PC-9 (cell line): ENCODE measurements at regions of chr1 and their contacts with region 1.

Region 1: DNA sequence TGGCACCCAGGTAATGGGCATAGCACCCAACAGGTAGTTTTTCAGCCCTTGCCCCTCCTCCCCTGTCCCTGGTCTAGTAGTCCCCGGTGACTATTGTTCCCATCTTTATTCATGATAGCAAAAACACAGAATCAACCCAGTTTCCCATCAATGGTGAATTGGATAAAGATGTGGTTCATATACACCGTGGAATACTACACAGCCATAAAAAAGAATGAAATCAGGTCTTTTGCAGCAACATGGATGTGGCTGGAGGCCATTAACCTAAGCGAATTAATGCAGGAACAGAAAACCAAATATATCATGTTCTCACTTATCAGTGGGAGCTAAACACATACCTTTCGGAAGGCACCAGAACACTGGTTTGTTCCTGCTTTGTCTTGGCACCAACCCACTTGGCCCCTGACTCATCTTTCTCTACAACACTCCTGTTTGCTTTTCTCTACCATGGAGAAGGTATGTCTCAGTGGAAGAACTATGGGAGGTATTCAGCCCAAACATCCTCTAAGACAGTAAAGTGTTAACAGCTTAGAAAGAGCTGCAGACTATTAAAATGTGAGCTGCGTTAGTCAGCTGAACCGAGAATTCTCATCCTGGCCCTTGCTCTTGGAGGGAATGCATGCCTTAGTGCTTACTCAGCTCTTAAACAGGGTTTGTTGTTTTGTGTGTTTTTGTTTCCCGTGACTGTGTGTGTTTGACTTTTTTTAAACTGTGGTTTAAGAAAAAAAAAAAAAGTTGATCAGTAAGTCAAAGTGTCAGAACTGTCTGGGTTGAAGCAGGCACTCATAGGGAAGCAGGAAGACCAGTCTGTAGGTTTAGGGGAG is 203.0 kb downstream of the TOMM20 start:
- DNase-seq: peak; percentile 74 to 99
- H3K4me3 ChIP-seq: no peak overlapping the region
- H3K27ac ChIP-seq: peak overlapping the region; percentile 88
- H3K4me1 ChIP-seq: peaks cover 37% of the 10 kb centered on the region
- H3K27me3 ChIP-seq: no peaks in the 10 kb centered on the region
- CTCF ChIP-seq: no peak

Region 2: DNA sequence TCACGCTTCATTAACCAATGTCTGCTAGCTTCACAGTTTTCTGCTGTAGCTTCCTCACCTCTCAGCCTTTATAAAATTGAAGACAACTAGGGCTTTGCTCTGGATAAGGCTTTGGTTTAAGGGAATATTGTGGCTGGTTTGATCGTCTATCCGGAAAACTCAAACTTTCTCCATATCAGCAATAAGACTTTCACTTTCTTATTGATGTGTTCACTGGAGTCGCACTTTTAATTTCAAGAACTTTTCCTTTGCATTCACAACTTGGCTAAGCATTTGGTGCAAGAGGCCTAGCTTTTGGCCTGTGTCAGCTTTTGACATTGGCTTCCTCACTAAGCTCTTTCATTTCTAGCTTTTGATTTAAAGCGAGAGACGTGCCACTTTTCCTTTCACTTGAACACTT is 539.5 kb before region 1 on chr1:
- CTCF ChIA-PET with region 1: no interaction called
- POLR2A ChIA-PET with region 1: no interaction called
- intact Hi-C with region 1: no loop called
- DNase-seq: no peak
- H3K4me3 ChIP-seq: no peak overlapping the region
- H3K27ac ChIP-seq: no peak overlapping the region
- H3K4me1 ChIP-seq: no peaks in the 10 kb centered on the region
- H3K27me3 ChIP-seq: no peaks in the 10 kb centered on the region
- CTCF ChIP-seq: no peak

Region 3: DNA sequence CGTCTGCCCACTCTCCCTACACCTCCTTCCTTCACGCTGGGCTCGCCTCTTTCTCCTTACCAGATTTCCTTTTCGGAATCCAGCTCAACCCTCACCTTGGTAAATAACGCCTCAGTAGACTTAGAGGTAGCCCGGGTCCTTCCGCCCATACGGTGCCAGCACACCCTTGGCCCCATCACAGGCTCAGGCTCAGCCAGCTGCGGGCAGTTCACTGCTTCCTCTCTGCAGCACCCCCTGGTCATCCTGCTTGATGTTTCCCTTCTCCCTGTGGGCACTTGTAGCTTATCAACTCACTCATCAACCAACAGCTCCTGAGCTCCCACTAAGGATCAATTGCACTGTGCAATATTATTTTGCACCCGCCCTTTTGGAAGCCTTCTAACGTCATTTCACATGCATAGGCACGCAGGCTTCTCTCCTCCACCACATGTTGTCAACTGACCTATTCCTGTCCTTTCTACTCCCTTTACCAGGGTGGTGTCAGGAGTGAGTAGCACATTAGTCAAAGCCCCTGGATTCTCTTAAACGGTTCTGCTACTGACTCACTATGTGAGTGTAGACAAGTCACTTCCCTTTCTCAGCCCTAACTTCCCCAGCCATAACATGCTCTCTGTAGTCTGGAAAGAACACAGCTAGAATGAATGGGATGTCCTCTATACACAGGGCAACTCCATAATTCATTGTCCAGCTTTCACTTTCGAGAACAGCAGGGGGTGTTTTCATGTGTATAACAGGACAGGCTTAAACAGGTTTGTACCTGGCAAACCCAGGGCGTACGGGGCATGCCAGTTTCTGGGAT is 268.6 kb before region 1 on chr1:
- CTCF ChIA-PET with region 1: no interaction called
- POLR2A ChIA-PET with region 1: no interaction called
- intact Hi-C with region 1: loop called (anchors 2 kb)
- DNase-seq: peak; percentile 50 to 95
- H3K4me3 ChIP-seq: peak overlapping the region; percentile 69
- H3K27ac ChIP-seq: peak overlapping the region; percentile 99
- H3K4me1 ChIP-seq: peaks cover 59% of the 10 kb centered on the region
- H3K27me3 ChIP-seq: no peaks in the 10 kb centered on the region
- CTCF ChIP-seq: no peak

Region 4: DNA sequence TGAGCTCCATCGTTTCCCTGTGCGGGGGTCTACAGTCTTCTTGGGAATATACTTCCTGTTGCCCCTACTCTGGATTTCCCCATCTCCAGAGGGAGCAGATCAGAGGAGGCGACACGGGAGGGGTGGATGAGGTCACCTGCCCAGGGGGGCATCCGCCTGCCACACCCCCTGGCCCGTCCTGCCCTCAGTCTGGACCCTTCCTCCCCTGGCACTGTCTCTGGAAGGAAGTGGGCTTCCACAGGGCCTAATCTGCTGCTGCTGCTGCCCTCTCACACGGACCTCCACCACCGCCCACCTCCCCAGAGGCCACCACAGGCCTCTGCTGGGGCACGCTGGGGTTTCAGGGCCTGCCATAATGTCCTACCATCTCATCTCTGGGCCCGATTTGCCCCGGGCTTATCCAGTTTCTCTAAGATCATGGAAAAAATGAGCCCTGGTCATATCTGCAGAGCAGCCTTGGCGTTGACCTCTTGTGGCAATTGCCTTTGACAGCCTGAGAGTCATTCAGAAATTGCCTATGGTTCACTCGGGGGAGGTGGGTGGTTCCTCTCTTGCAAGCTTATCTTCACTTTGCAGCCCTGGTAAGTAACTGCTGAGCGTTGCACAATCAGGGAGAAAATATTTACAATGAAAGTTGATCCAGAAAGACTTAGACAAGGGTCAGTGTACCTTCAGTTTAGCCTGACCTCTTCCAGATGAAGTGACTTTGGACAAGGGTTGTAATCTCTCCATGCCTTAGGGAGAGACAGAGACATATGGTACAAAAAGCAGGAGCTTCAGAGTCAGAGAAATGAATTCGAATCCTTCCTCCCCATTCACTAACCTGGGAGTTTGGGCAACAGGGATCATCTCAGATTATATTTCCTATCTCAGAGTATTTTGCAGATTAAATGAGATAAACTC is 49.4 kb before region 1 on chr1:
- CTCF ChIA-PET with region 1: no interaction called
- POLR2A ChIA-PET with region 1: no interaction called
- intact Hi-C with region 1: loop called (anchors 2 kb)
- DNase-seq: peak; percentile 70 to 98
- H3K4me3 ChIP-seq: peak overlapping the region; percentile 45; the same call in 1 of the 2 replicates
- H3K27ac ChIP-seq: peak overlapping the region; percentile 99
- H3K4me1 ChIP-seq: peaks cover 70% of the 10 kb centered on the region
- H3K27me3 ChIP-seq: no peaks in the 10 kb centered on the region
- CTCF ChIP-seq: no peak

Region 5: GRCh38 chr1:234950598-234950997 is 24.9 kb after region 1 on chr1:
- CTCF ChIA-PET with region 1: no interaction called
- POLR2A ChIA-PET with region 1: interaction called, 22 read pairs
- intact Hi-C with region 1: no loop called
- DNase-seq: no peak
- H3K4me3 ChIP-seq: no peak overlapping the region
- H3K27ac ChIP-seq: no peak overlapping the region
- H3K4me1 ChIP-seq: peaks cover 13% of the 10 kb centered on the region
- H3K27me3 ChIP-seq: no peaks in the 10 kb centered on the region
- CTCF ChIP-seq: no peak

Region 6: DNA sequence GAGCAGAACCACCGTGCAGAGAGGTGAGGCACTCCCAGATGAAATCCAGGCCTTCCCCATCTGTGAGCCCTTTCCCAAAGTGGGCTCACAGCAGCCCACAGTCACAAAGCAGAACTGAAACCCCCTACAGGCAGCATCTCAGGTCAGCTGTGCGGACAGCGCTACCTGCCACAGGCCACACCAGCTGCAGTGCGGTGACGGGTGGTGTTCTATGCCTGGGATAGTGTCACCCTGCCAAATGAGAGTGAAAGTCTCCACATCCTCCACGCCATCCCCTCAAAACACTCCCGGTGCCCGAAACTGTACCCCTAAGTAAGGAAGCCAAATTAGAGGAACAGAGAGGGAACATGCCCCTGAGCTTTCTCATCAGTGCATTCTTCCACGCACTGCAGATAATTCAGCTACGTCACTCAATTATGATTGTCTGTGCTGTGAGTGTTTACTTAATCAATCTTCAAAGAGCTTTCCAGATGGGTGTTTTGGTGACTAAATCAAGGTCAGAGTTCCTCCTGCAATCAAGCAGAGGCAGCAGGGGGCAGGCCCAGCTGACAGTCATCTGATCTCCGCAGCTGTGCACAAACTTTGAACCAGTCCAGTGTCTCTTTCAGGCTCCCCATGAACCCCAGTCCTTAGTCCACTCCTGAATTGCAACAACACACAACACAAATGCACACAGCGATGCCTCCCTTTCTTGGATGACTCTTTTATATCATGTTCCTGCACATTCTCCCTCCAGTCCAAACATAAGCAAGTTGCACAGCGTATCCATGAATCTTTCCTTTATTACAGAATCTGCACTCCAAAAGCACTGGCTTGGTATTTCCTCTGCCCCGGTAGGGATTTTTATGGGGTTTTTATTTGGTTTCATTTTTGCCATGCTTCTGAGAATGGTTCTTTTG is 53.0 kb after region 1 on chr1:
- CTCF ChIA-PET with region 1: no interaction called
- POLR2A ChIA-PET with region 1: interaction called, 5 read pairs
- intact Hi-C with region 1: loop called (anchors 1 kb)
- DNase-seq: peak; percentile 45 to 93
- H3K4me3 ChIP-seq: peak overlapping the region; percentile 30; the same call in 1 of the 2 replicates
- H3K27ac ChIP-seq: peak overlapping the region; percentile 99
- H3K4me1 ChIP-seq: peaks cover 99% of the 10 kb centered on the region
- H3K27me3 ChIP-seq: no peaks in the 10 kb centered on the region
- CTCF ChIP-seq: no peak

Region 7: DNA sequence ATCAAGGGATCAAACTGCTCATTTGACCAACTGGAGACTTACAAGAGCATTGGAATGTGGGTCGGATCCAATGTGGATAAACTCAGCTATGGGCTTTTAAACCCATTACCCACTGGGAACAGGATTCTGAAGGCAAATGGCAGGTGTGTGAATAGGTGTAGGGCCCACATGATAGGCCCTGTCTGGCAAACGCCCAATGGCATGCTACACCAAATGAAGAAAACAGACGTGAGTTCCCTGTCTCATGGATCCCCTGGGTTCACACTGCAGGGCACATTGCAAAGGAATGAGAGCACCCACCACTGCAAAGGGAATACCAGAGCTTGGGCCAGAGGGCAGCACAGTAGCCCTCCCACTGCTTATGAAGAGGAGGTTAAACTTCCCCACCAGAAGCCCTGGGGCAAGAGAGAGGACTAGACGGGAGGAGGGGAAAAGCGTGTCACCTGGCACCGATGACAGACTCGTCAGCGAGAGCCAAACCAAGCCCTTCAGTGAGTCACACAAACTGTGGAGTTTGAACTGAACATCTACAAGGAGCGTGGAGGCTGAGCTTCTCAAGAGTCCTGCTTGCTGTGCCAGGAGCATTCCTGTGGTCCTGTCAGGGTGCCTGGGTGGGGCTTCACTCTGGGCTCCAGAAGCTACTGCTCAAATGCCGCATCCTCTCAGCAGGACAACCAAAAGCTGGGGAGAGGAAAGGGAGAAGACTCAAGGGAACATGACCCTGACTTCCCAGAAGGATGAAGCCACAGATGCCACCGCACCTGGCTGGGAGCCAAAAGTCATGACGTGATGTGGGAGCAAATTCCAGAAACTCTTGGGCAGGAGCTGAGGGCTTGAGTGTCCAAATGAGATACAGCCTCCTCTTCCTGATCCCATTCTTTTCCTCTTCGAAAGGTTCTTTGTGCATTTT is 141.9 kb after region 1 on chr1:
- CTCF ChIA-PET with region 1: no interaction called
- POLR2A ChIA-PET with region 1: interaction called, 3 read pairs
- intact Hi-C with region 1: loop called (anchors 1 kb)
- DNase-seq: peak; percentile 98 to 100
- H3K4me3 ChIP-seq: peak overlapping the region; percentile 39; the same call in 1 of the 2 replicates
- H3K27ac ChIP-seq: peak overlapping the region; percentile 100
- H3K4me1 ChIP-seq: peaks cover 68% of the 10 kb centered on the region
- H3K27me3 ChIP-seq: no peaks in the 10 kb centered on the region
- CTCF ChIP-seq: no peak

Region 8: DNA sequence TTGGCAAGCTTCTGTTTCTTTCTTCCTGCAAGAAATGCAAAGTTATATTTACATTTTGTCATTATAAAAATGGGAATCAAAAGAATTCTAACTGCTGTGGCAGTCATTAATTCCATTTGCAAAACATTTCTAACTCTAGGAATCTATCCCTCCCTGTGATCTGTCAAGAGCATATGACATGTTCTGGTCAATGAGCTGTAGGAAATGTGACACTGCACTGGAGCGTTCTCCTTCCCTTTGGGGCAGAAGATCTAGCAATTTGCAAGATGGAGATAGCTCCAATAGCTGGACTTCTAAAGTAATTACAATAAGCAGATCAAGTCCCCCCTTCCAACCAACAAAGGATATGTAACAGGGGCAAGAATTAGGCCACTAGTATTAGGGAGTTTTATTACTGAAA is 196.7 kb after region 1 on chr1:
- CTCF ChIA-PET with region 1: no interaction called
- POLR2A ChIA-PET with region 1: interaction called, 16 read pairs
- intact Hi-C with region 1: no loop called
- DNase-seq: no peak
- H3K4me3 ChIP-seq: no peak overlapping the region
- H3K27ac ChIP-seq: no peak overlapping the region
- H3K4me1 ChIP-seq: peaks cover 35% of the 10 kb centered on the region
- H3K27me3 ChIP-seq: no peaks in the 10 kb centered on the region
- CTCF ChIP-seq: no peak